ENCODE measurements at regions of chr9 and their contacts with region 1.

Region 1: GRCh38 chr9:133144137-133144903 is 19.4 kb downstream of the GBGT1 start:
- DNase-seq: peak; percentile 90 to 94 (median 92)
- H3K4me3 ChIP-seq: peak overlapping the region in 4 of 7 experiments; percentile 21 to 61 (median 58)
- H3K27ac ChIP-seq: peak overlapping the region in 1 of 2 experiments; percentile 64
- H3K4me1 ChIP-seq: peaks cover 3 to 78% (median 75%) of the 10 kb centered on the region in 4 experiments
- H3K27me3 ChIP-seq: no peaks in the 10 kb centered on the region

Region 2: GRCh38 chr9:132923346-132923902 is 220.9 kb before region 1 on chr9:
- CTCF ChIA-PET with region 1: no interaction called
- POLR2A ChIA-PET with region 1: no interaction called
- DNase-seq: no peak
- H3K4me3 ChIP-seq: no peak overlapping the region
- H3K27ac ChIP-seq: no peak overlapping the region
- H3K4me1 ChIP-seq: no peaks in the 10 kb centered on the region
- H3K27me3 ChIP-seq: no peaks in the 10 kb centered on the region

Region 3: GRCh38 chr9:133048569-133048968 is 95.8 kb before region 1 on chr9:
- CTCF ChIA-PET with region 1: interaction called, 11 read pairs
- POLR2A ChIA-PET with region 1: interaction called, 4 read pairs
- DNase-seq: peak; percentile 57 to 77 (median 76)
- H3K4me3 ChIP-seq: no peak overlapping the region
- H3K27ac ChIP-seq: no peak overlapping the region
- H3K4me1 ChIP-seq: peaks cover 0 to 4% (median 2%) of the 10 kb centered on the region in 4 experiments
- H3K27me3 ChIP-seq: no peaks in the 10 kb centered on the region

Region 4: GRCh38 chr9:133094842-133095393 is 49.4 kb before region 1 on chr9:
- CTCF ChIA-PET with region 1: interaction called, 445 read pairs
- POLR2A ChIA-PET with region 1: interaction called, 3 read pairs
- DNase-seq: no peak
- H3K4me3 ChIP-seq: no peak overlapping the region
- H3K27ac ChIP-seq: no peak overlapping the region
- H3K4me1 ChIP-seq: peaks cover 0 to 3% (median 0%) of the 10 kb centered on the region in 4 experiments
- H3K27me3 ChIP-seq: no peaks in the 10 kb centered on the region

Region 5: DNA sequence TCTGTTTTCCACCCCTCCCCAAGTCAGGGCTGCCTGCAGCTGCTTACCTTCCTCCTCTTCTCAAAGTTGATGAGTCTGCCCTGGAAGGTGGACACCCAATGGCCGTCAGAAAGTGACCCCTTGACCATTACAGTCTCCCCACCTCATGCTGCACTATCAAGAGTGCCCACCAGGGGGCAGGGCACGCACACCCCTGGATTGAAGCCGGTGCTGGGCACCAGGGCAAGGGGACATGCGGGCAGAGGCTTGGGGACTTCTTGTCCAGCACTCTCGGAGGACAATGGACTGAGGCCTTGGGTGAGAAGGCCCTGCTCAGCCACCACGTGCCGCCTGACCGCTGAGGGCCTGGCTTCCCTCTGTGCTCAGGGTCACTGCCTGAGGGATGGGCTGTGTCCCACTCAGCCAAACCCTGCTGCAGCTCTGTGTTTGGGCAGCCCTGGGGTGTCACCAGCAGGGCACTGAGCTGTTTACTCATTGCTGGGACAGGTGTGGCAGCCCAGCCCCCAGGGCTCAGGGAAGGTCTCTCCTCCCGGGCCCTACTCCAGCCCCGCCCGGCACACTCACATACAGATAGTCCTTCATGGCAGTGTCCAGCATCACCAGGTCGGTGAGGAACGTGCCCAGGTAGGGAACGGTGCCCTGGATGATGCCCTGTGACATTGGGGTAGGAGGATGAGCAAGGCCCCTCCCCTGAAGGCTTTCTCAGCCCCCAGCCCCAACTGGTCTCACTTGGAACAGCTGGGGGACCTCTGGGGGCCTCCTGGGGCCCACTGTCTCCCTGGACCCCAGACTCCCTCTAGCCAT is 40.9 kb before region 1 on chr9:
- CTCF ChIA-PET with region 1: interaction called, 445 read pairs
- POLR2A ChIA-PET with region 1: interaction called, 19 read pairs
- DNase-seq: peak in 1 of 3 donors; percentile 40
- H3K4me3 ChIP-seq: no peak overlapping the region
- H3K27ac ChIP-seq: no peak overlapping the region
- H3K4me1 ChIP-seq: no peaks in the 10 kb centered on the region
- H3K27me3 ChIP-seq: no peaks in the 10 kb centered on the region

Region 6: GRCh38 chr9:133108794-133109641 is 35.3 kb before region 1 on chr9:
- CTCF ChIA-PET with region 1: interaction called, 445 read pairs
- POLR2A ChIA-PET with region 1: interaction called, 111 read pairs
- DNase-seq: no peak
- H3K4me3 ChIP-seq: no peak overlapping the region
- H3K27ac ChIP-seq: no peak overlapping the region
- H3K4me1 ChIP-seq: peaks cover 0 to 27% (median 27%) of the 10 kb centered on the region in 4 experiments
- H3K27me3 ChIP-seq: no peaks in the 10 kb centered on the region

Region 7: DNA sequence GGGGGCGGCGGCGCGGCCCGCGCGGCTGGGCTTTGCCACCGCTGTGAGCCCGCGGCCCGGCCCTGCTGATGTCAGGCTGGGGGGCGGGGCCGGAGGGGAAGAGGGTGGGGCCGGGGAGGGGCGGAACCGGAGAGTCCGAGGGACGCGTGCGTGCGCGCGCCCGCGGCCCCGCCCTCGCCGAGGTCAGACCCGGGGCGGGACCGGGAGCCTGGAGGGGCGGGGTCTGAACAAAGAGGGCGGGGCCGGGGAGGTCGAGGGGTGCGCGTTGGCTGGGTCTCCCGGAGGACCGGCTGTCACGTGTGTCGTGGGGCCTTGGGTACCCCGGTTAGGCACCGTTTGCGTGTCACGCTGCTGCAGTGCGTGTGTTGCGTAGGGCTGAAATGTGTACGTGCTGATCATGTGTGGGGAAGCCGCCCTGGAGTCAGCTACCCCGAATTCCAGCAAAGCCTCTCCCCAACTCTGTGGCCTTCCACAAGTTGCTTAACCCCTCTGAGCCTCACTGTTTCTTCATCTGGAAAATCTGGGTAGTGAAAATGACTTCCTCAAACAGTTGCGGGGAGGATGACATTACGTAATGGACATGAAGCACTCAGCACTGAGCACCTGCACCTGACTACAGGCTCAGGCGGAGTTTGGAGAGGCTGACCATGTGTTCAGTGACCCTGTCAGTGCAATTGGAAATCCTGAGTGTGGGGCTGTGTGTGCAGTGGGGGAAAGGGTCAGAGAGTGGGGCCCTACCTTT is 23.0 kb before region 1 on chr9 and contains the start of gene RALGDS:
- CTCF ChIA-PET with region 1: interaction called, 445 read pairs
- POLR2A ChIA-PET with region 1: interaction called, 111 read pairs
- DNase-seq: peak; percentile 85 to 93 (median 92)
- H3K4me3 ChIP-seq: peak within 1 kb of the TSS; percentile 33 to 80 (median 68)
- H3K27ac ChIP-seq: peak within 1 kb of the TSS; percentile 68 to 74
- H3K4me1 ChIP-seq: peaks cover 0 to 94% (median 81%) of the 10 kb centered on the region in 4 experiments
- H3K27me3 ChIP-seq: no peaks in the 10 kb centered on the region

Region 8: GRCh38 chr9:133133681-133134418 is 10.5 kb before region 1 on chr9:
- CTCF ChIA-PET with region 1: interaction called, 71 read pairs
- POLR2A ChIA-PET with region 1: interaction called, 36 read pairs
- DNase-seq: peak; percentile 96 to 98 (median 97)
- H3K4me3 ChIP-seq: peak overlapping the region in 2 of 7 experiments; percentile 25 to 42
- H3K27ac ChIP-seq: peak overlapping the region; percentile 97 to 98
- H3K4me1 ChIP-seq: peaks cover 3 to 72% (median 59%) of the 10 kb centered on the region in 4 experiments
- H3K27me3 ChIP-seq: no peaks in the 10 kb centered on the region

Measured in common myeloid progenitor, CD34-positive (primary cell).